H1 (cell line): ENCODE measurements at regions of chr6 and their contacts with region 1.

Region 1: GRCh38 chr6:52650941-52651340 is 20.0 kb upstream of the TMEM14A start:
- DNase-seq: no peak
- H3K4me3 ChIP-seq: no peak overlapping the region
- H3K27ac ChIP-seq: no peak overlapping the region
- H3K4me1 ChIP-seq: peaks cover 0 to 3% (median 0%) of the 10 kb centered on the region in 4 experiments; a peak in 1 of 7 replicates
- H3K27me3 ChIP-seq: no peaks in the 10 kb centered on the region
- CTCF ChIP-seq: no peak
- EP300 ChIP-seq: no peak
- POLR2A ChIP-seq: no peak
- RAD21 ChIP-seq: no peak

Region 2: GRCh38 chr6:52551401-52552277 is 99.3 kb before region 1 on chr6:
- CTCF ChIA-PET with region 1: interaction called, 10 read pairs
- POLR2A ChIA-PET with region 1: interaction called, 3 read pairs
- DNase-seq: peak in 1 of 2 experiments; percentile 70
- H3K4me3 ChIP-seq: peak overlapping the region in 3 of 4 experiments; percentile 10 to 43 (median 23); a peak in 4 of 8 replicates
- H3K27ac ChIP-seq: peak overlapping the region; percentile 40; the same call in 1 of the 2 replicates
- H3K4me1 ChIP-seq: peaks cover 11 to 17% (median 12%) of the 10 kb centered on the region in 4 experiments
- H3K27me3 ChIP-seq: no peaks in the 10 kb centered on the region
- CTCF ChIP-seq: peak in 1 of 3 experiments; percentile 4; a peak in 2 of 4 replicates
- EP300 ChIP-seq: no peak
- POLR2A ChIP-seq: no peak
- RAD21 ChIP-seq: peak; percentile 37 to 47; a peak in 2 of 4 replicates

Region 3: GRCh38 chr6:52590152-52590931 is 60.6 kb before region 1 on chr6:
- CTCF ChIA-PET with region 1: interaction called, 10 read pairs
- POLR2A ChIA-PET with region 1: no interaction called
- DNase-seq: no peak
- H3K4me3 ChIP-seq: no peak overlapping the region
- H3K27ac ChIP-seq: no peak overlapping the region
- H3K4me1 ChIP-seq: peaks cover 0 to 8% (median under 1%) of the 10 kb centered on the region in 4 experiments; a peak in 3 of 7 replicates
- H3K27me3 ChIP-seq: no peaks in the 10 kb centered on the region
- CTCF ChIP-seq: peak in 1 of 3 experiments; percentile 9; a peak in 1 of 4 replicates
- EP300 ChIP-seq: no peak
- POLR2A ChIP-seq: no peak
- RAD21 ChIP-seq: peak; percentile 34 to 37

Region 4: GRCh38 chr6:52635049-52635577 is 15.8 kb before region 1 on chr6:
- CTCF ChIA-PET with region 1: interaction called, 36 read pairs
- POLR2A ChIA-PET with region 1: no interaction called
- DNase-seq: no peak
- H3K4me3 ChIP-seq: no peak overlapping the region
- H3K27ac ChIP-seq: no peak overlapping the region
- H3K4me1 ChIP-seq: peaks cover 0 to 2% (median under 1%) of the 10 kb centered on the region in 4 experiments; a peak in 1 of 7 replicates
- H3K27me3 ChIP-seq: no peaks in the 10 kb centered on the region
- CTCF ChIP-seq: no peak
- EP300 ChIP-seq: no peak
- POLR2A ChIP-seq: no peak
- RAD21 ChIP-seq: no peak

Region 5: DNA sequence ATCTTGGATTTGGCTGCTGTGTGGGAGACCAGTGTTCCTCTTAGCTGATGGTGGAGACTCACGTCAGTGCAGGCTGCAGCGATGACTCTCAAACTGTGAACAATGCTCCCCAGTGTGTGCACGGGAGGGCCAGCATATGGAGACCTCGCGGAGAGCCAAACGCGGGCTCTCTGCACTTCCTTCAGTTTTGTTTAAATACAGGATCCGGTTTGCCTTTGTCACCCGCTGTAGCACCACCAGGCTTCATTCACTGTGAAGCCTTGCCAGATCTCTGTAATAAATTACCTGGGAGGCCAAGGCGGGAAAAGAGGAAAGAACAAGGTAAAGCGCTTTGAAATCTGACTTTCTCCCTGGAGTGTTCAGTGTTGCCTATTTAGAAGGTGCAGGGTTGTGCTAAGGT is 10.8 kb before region 1 on chr6:
- CTCF ChIA-PET with region 1: interaction called, 39 read pairs
- POLR2A ChIA-PET with region 1: no interaction called
- DNase-seq: no peak
- H3K4me3 ChIP-seq: no peak overlapping the region
- H3K27ac ChIP-seq: no peak overlapping the region
- H3K4me1 ChIP-seq: peaks cover 0 to 2% (median under 1%) of the 10 kb centered on the region in 4 experiments; a peak in 1 of 7 replicates
- H3K27me3 ChIP-seq: no peaks in the 10 kb centered on the region
- CTCF ChIP-seq: no peak
- EP300 ChIP-seq: no peak
- POLR2A ChIP-seq: no peak
- RAD21 ChIP-seq: no peak

Region 6: GRCh38 chr6:52664186-52664990 is 13.4 kb after region 1 on chr6:
- CTCF ChIA-PET with region 1: interaction called, 80 read pairs
- POLR2A ChIA-PET with region 1: interaction called, 4 read pairs
- DNase-seq: peak; percentile 93
- H3K4me3 ChIP-seq: peak overlapping the region; percentile 66 to 76 (median 74)
- H3K27ac ChIP-seq: no peak overlapping the region
- H3K4me1 ChIP-seq: peaks cover 0 to 10% (median 5%) of the 10 kb centered on the region in 4 experiments; a peak in 3 of 7 replicates
- H3K27me3 ChIP-seq: peaks cover 0 to 10% (median 7%) of the 10 kb centered on the region in 4 experiments; a peak in 5 of 7 replicates
- CTCF ChIP-seq: no peak
- EP300 ChIP-seq: no peak
- POLR2A ChIP-seq: peak; percentile 90 to 95
- RAD21 ChIP-seq: no peak

Region 7: GRCh38 chr6:52672422-52673025 is 21.6 kb after region 1 on chr6:
- CTCF ChIA-PET with region 1: interaction called, 19 read pairs
- POLR2A ChIA-PET with region 1: interaction called, 3 read pairs
- DNase-seq: no peak
- H3K4me3 ChIP-seq: no peak overlapping the region
- H3K27ac ChIP-seq: no peak overlapping the region
- H3K4me1 ChIP-seq: peaks cover 0 to 10% (median 4%) of the 10 kb centered on the region in 4 experiments; a peak in 6 of 7 replicates
- H3K27me3 ChIP-seq: peaks cover 0 to 3% (median 0%) of the 10 kb centered on the region in 4 experiments; a peak in 2 of 7 replicates
- CTCF ChIP-seq: no peak
- EP300 ChIP-seq: no peak
- POLR2A ChIP-seq: no peak
- RAD21 ChIP-seq: no peak

Region 8: DNA sequence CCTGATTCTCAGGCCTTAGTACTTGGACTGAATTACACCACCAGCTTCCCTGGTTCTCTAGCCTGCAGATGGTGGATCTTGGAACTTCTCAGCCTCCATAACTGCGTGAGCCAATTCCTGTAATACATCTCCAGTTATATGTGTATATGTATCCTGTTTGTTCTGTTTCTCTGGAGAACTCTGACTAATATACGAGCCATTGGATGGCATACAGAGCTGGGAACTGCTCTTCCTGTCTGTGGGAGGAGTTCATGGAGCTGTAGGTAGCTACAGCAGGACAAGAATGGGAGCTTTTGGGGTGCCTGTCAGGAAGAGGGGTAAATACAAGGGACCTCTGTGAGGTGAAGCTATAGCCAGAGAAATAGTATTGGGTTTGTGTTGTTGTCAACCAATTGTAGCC is 61.2 kb after region 1 on chr6:
- CTCF ChIA-PET with region 1: no interaction called
- POLR2A ChIA-PET with region 1: no interaction called
- DNase-seq: no peak
- H3K4me3 ChIP-seq: no peak overlapping the region
- H3K27ac ChIP-seq: no peak overlapping the region
- H3K4me1 ChIP-seq: no peaks in the 10 kb centered on the region
- H3K27me3 ChIP-seq: no peaks in the 10 kb centered on the region
- CTCF ChIP-seq: no peak
- EP300 ChIP-seq: no peak
- POLR2A ChIP-seq: no peak
- RAD21 ChIP-seq: no peak